Spleen (tissue), 13 donors: ENCODE measurements at regions of chr10 and their contacts with region 1.

Region 1: GRCh38 chr10:35635576-35635975 is 6.5 kb downstream of the FZD8 start:
- DNase-seq: no peak
- H3K4me3 ChIP-seq: no peak overlapping the region
- H3K27ac ChIP-seq: no peak overlapping the region
- H3K4me1 ChIP-seq: peaks cover 0 to 45% (median 27%) of the 10 kb centered on the region in 6 donors
- H3K27me3 ChIP-seq: peaks cover 0 to 56% (median 14%) of the 10 kb centered on the region in 7 donors
- CTCF ChIP-seq: peak; percentile 36 to 87 (median 79)
- POLR2A ChIP-seq: no peak

Region 2: GRCh38 chr10:35716776-35717175 is 81.2 kb after region 1 on chr10:
- intact Hi-C with region 1: no loop called
- DNase-seq: no peak
- H3K4me3 ChIP-seq: no peak overlapping the region
- H3K27ac ChIP-seq: no peak overlapping the region
- H3K4me1 ChIP-seq: no peaks in the 10 kb centered on the region
- H3K27me3 ChIP-seq: peaks cover 0 to 7% (median 0%) of the 10 kb centered on the region in 7 donors
- CTCF ChIP-seq: no peak
- POLR2A ChIP-seq: no peak

Region 3: GRCh38 chr10:35875016-35875676 is 239.6 kb after region 1 on chr10:
- intact Hi-C with region 1: no loop called
- DNase-seq: no peak
- H3K4me3 ChIP-seq: no peak overlapping the region
- H3K27ac ChIP-seq: no peak overlapping the region
- H3K4me1 ChIP-seq: no peaks in the 10 kb centered on the region
- H3K27me3 ChIP-seq: no peaks in the 10 kb centered on the region
- CTCF ChIP-seq: no peak
- POLR2A ChIP-seq: no peak

Region 4: GRCh38 chr10:36779234-36779846 is 1143.8 kb after region 1 on chr10:
- intact Hi-C with region 1: loop called (anchors 5 kb)
- DNase-seq: no peak
- H3K4me3 ChIP-seq: no peak overlapping the region
- H3K27ac ChIP-seq: no peak overlapping the region
- H3K4me1 ChIP-seq: peaks cover 0 to 16% (median 5%) of the 10 kb centered on the region in 6 donors
- H3K27me3 ChIP-seq: no peaks in the 10 kb centered on the region
- CTCF ChIP-seq: peak; percentile 30 to 81 (median 64)
- POLR2A ChIP-seq: no peak

Region 5: DNA sequence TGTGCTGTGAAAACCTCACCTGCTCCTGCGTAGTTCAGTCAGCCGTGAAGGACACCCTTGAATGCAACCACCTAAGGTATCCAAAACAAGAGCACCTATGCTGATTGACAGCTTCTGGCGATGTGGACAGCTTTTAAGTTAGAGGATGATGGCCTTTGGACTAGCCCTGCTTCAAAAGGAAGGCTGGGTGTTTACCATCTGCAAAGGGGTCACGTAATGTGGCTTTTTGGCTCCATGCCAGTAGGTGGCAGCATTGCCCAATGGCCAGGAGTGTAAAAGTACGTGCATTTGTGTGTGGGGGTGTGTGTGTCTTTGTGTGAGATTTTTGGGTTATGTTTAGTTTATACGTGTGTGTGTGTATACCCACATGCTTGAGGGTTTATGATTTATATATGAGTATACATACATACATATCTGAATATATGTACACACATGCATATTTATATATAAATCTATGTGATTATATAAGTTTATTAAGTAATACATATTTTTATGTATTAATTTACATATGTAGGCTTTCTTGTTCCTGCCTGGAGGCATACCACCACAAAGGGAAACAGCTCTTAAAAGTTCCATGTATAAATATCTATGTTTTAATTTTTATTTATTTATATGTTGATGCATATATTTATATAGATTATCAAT is 1253.5 kb after region 1 on chr10:
- intact Hi-C with region 1: loop called (anchors 10 kb)
- DNase-seq: no peak
- H3K4me3 ChIP-seq: no peak overlapping the region
- H3K27ac ChIP-seq: no peak overlapping the region
- H3K4me1 ChIP-seq: no peaks in the 10 kb centered on the region
- H3K27me3 ChIP-seq: no peaks in the 10 kb centered on the region
- CTCF ChIP-seq: peak in 4 of 11 experiments; percentile 15 to 43 (median 31)
- POLR2A ChIP-seq: no peak